ENCODE measurements at regions of chr2 and their contacts with region 1.

Region 1: DNA sequence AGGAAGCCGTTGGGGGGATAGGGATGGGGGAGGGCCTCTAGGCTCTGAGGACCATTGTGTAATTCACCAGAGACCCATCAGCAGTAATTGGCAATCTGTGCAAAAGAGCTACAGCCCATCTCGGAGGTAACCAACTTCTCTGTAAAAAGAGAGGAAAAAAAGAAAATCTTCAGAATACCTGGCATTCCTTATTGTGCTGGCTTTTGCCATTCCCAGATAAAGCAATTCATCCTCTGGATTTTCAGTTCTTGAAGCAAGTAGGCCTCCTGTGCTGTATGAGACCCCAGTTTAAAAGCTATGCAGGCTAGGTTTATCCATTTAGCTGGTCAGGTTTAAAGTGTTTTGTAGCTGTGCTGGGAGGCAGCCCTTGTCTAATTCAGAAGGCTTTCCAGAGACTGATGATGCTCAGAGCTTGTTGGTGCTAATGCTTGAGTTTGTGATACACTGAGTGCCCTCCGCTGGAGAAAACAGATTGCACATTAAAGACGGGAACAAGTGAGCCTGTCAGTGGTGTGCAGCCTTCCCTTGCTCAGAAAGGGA is at the start of gene LRRTM4:
- DNase-seq: peak in 1 of 2 experiments; percentile 15
- H3K4me3 ChIP-seq: no peak within 1 kb of the TSS
- H3K4me3 Mint-ChIP-seq: no peak within 1 kb of the TSS
- H3K27ac Mint-ChIP-seq: no peak within 1 kb of the TSS
- H3K4me1 ChIP-seq: no peaks in the 10 kb centered on the region
- H3K4me1 Mint-ChIP-seq: no peaks in the 10 kb centered on the region
- H3K27me3 ChIP-seq: no peaks in the 10 kb centered on the region
- H3K27me3 Mint-ChIP-seq: peaks cover 11% of the 10 kb centered on the region
- CTCF ChIP-seq: no peak
- total RNA-seq, gene LRRTM4: 0.21 and 0.32 TPM in 2 replicates

Region 2: DNA sequence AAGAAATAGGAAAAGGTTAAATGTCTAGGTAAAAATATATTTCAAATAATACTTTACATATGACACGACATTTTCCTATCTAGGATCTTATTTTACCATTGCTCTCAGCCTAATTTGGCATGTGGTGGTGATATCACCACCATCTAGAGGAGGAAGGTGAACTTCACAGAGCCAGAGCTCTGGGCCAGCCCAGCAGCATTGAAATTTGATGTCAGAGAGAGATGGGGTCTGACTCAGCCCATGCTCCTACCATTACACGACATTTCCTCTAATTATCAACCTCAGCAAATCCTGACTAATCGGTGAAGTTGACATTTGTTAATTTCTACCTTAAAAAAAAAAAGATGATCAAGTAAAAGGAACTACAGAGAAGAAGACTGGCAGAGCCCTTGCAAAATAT is 42.1 kb before region 1 on chr2:
- CTCF ChIA-PET with region 1: no interaction called
- POLR2A ChIA-PET with region 1: no interaction called
- intact Hi-C with region 1: loop called (anchors 5 kb)
- DNase-seq: no peak
- H3K4me3 ChIP-seq: no peak overlapping the region
- H3K4me3 Mint-ChIP-seq: no peak overlapping the region
- H3K27ac Mint-ChIP-seq: no peak overlapping the region
- H3K4me1 ChIP-seq: no peaks in the 10 kb centered on the region
- H3K4me1 Mint-ChIP-seq: no peaks in the 10 kb centered on the region
- H3K27me3 ChIP-seq: no peaks in the 10 kb centered on the region
- H3K27me3 Mint-ChIP-seq: peaks cover 6% of the 10 kb centered on the region
- CTCF ChIP-seq: no peak